OCI-LY7 (cell line): ENCODE measurements at regions of chr16 and their contacts with region 1.

Region 1: DNA sequence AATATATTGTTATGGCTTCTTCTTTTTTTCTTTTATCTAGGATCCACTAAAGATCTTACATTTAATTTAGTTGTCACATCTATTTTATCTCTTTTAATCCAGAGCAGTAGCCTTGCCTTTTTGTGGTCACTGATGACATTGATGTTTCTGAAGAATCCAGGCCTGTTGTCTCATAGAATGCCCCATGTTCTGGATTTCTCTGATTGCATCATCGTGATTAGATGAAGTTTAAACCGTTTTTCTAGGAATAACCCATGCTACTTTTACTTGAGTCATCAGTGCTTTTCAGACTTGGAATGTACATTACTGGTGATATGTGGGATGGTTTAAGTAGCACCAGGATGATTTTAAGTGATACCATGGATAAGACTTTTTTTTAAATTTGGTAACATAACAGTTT is 106.4 kb upstream of the CES5A start:
- DNase-seq: no peak
- H3K4me3 ChIP-seq: no peak overlapping the region
- H3K27ac ChIP-seq: no peak overlapping the region
- H3K4me1 ChIP-seq: no peaks in the 10 kb centered on the region
- CTCF ChIP-seq: no peak

Region 2: GRCh38 chr16:55735120-55735781 is 246.3 kb before region 1 on chr16:
- CTCF ChIA-PET with region 1: no interaction called
- POLR2A ChIA-PET with region 1: no interaction called
- intact Hi-C with region 1: no loop called
- DNase-seq: no peak
- H3K4me3 ChIP-seq: no peak overlapping the region
- H3K27ac ChIP-seq: no peak overlapping the region
- H3K4me1 ChIP-seq: no peaks in the 10 kb centered on the region
- CTCF ChIP-seq: no peak

Region 3: GRCh38 chr16:56041686-56042085 is 60.1 kb after region 1 on chr16:
- CTCF ChIA-PET with region 1: no interaction called
- POLR2A ChIA-PET with region 1: no interaction called
- intact Hi-C with region 1: no loop called
- DNase-seq: peak; percentile 10
- H3K4me3 ChIP-seq: no peak overlapping the region
- H3K27ac ChIP-seq: no peak overlapping the region
- H3K4me1 ChIP-seq: no peaks in the 10 kb centered on the region
- CTCF ChIP-seq: peak; percentile 66

Region 4: DNA sequence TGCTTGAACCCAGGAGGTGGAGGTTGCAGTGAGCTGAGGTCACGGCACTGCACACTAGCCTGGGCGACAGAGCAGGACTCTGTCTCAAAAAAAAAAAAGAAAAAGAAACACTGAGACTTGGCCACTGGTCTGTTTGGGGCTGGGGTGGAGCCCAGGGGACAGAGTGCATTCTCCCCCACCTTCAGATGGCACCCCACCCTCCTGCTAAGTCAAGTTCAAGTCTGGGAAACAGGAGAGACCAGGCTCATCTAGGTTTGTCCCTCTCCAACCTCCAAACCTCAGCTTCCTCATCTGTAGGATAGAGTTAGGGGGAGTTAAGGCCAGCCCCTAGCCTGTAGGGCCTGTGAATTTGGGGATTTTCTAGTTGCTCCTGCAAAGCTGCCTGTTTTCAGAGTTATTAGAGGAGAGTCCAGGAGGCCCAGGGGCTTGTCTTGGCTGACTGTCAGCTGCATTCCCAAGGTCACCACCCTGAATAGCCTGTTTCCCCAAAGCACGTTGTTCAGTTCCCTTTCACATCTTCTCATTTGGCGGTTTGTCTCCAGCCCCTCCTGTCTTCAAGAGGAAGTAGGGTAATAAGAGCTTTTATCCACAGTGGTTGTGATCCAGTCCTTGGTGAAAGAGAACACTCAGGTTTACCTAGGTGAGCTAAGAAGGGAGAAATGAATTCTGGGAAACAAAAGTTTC is 610.0 kb after region 1 on chr16:
- CTCF ChIA-PET with region 1: no interaction called
- POLR2A ChIA-PET with region 1: interaction called, 12 read pairs
- intact Hi-C with region 1: no loop called
- DNase-seq: no peak
- H3K4me3 ChIP-seq: no peak overlapping the region
- H3K27ac ChIP-seq: no peak overlapping the region
- H3K4me1 ChIP-seq: peaks cover 14% of the 10 kb centered on the region
- CTCF ChIP-seq: no peak